ENCODE measurements at regions of chr14 and their contacts with region 1.

Region 1: GRCh38 chr14:94129111-94129757 is at the start of gene IFI27L2:
- DNase-seq: peak; percentile 88
- H3K4me3 ChIP-seq: peak within 1 kb of the TSS; percentile 26 to 61 (median 56)
- H3K27ac ChIP-seq: peak within 1 kb of the TSS; percentile 77 to 88 (median 80)
- H3K4me1 ChIP-seq: peaks cover 0 to 20% (median 12%) of the 10 kb centered on the region in 4 donors
- H3K27me3 ChIP-seq: no peaks in the 10 kb centered on the region
- CTCF ChIP-seq: peak in 3 of 4 experiments; percentile 29 to 53 (median 44)
- EP300 ChIP-seq: no peak
- POLR2A ChIP-seq: no peak
- total RNA-seq, gene IFI27L2: 47.9 to 145 (median 91.7) TPM

Region 2: GRCh38 chr14:94051115-94051514 is 78.1 kb before region 1 on chr14:
- intact Hi-C with region 1: no loop called
- DNase-seq: peak; percentile 81
- H3K4me3 ChIP-seq: no peak overlapping the region
- H3K27ac ChIP-seq: peak overlapping the region in 1 of 4 donors; percentile 19
- H3K4me1 ChIP-seq: peaks cover 0 to 18% (median 13%) of the 10 kb centered on the region in 4 donors
- H3K27me3 ChIP-seq: no peaks in the 10 kb centered on the region
- CTCF ChIP-seq: peak in 3 of 4 experiments; percentile 14 to 45 (median 17)
- EP300 ChIP-seq: no peak
- POLR2A ChIP-seq: no peak

Region 3: DNA sequence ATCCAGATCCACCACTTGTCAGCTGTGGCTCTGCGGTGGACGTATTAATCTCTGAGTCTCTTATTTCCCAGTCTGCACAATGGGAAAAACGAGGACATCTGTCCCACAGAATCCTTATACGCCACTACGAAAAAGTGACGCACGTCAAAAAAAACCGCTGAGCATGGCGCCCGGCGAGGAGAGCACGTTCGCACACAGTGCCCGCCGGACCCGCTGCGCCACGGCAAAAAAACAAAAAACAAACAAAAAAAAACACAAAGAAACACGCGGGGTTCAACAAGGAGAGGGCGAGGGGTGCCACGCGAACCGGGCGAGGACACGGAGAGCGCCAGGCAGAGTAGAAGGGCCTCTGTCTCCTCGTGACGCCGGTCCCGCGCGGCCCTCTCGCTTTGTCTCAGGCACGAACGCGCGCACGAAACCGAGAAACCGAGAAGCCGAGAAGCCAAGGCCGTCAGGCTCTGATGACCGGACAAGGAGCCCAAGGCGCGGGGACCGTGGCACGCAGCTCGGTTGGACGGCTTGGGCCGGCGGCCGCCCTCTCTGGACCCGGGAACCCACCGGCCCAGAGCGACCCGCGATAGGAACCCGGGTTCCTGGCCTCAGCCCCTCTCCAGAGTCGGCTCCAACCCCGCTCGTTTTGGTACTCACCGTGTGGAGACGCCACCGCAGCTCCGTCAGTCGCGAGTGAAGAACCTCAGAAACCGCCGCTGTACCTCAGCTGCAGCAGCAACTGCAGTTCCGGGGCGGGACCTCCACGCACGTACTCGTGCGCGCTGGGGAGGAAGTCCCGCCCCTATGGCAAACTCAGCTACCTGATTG is 48.6 kb before region 1 on chr14 and contains the start of gene DDX24:
- intact Hi-C with region 1: loop called (anchors 2 kb)
- DNase-seq: peak; percentile 98
- H3K4me3 ChIP-seq: peak within 1 kb of the TSS; percentile 88 to 98 (median 92)
- H3K27ac ChIP-seq: peak within 1 kb of the TSS; percentile 88 to 97 (median 95)
- H3K4me1 ChIP-seq: peaks cover 0 to 54% (median 46%) of the 10 kb centered on the region in 4 donors
- H3K27me3 ChIP-seq: no peaks in the 10 kb centered on the region
- CTCF ChIP-seq: no peak
- EP300 ChIP-seq: no peak
- POLR2A ChIP-seq: peak; percentile 95 to 99
- total RNA-seq, gene DDX24: 109 to 147 (median 133) TPM

Region 4: GRCh38 chr14:94355191-94355797 is 226.1 kb after region 1 on chr14:
- intact Hi-C with region 1: no loop called
- DNase-seq: no peak
- H3K4me3 ChIP-seq: no peak overlapping the region
- H3K27ac ChIP-seq: no peak overlapping the region
- H3K4me1 ChIP-seq: no peaks in the 10 kb centered on the region
- H3K27me3 ChIP-seq: no peaks in the 10 kb centered on the region
- CTCF ChIP-seq: peak in 1 of 4 experiments; percentile 27
- EP300 ChIP-seq: no peak
- POLR2A ChIP-seq: no peak